ENCODE measurements at regions of chr19 and their contacts with region 1.

Region 1: DNA sequence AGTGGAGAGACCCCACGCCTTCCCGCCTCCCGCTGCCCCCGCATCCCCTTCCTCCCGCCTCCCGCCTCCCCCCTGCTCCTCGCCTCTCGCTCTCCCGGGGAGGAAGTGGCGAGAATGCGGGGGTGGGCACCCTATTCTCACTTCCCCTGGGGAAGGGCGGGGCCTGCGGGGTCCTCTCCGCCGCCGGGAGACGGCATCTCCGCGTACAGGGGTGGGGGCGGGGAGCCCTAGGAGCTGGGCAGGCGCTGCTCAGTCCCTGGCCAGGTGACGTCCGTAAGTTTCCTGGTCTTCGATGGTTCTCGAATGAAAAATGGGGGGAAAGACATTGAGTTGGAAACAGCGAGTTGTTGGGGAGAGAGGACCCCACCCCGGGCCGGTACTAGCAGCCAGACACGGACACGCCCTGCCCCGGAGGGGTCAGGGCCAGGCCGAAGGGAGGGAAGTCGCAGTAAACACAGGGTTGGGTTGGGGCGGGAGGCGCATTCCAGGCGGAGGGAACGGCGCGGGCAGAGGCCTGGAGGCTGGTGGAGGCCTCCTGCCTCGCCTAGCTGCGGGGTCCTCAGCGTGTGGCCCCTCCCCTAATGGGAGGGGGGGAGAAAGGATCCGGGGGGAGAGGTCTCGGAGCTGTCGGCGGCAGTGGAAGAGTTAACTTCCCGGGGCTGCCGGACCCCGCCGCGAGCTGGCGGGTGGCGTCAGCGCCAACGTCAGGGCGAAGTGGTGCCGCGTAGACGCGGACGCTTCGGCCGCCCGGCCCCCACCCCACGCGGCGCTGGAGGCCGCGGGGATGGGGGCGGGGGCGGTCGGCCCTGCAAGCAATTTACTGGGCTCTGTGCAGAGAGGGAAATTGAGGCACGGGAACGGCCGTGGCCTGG is 10.4 kb upstream of the JUND start:
- DNase-seq: peak in 8 of 9 donors; percentile 67 to 93 (median 70)
- ATAC-seq: peak; percentile 62
- H3K4me3 ChIP-seq: peak overlapping the region; percentile 84
- H3K4me3 Mint-ChIP-seq: peak overlapping the region; percentile 80 to 96 (median 92)
- H3K27ac ChIP-seq: peak overlapping the region; percentile 92
- H3K27ac Mint-ChIP-seq: peak overlapping the region; percentile 87 to 100 (median 97)
- H3K4me1 ChIP-seq: peaks cover 41 to 47% of the 10 kb centered on the region in 2 donors
- H3K4me1 Mint-ChIP-seq: peaks cover 38 to 73% (median 58%) of the 10 kb centered on the region in 7 donors
- H3K27me3 ChIP-seq: no peaks in the 10 kb centered on the region
- H3K27me3 Mint-ChIP-seq: no peaks in the 10 kb centered on the region

Region 2: DNA sequence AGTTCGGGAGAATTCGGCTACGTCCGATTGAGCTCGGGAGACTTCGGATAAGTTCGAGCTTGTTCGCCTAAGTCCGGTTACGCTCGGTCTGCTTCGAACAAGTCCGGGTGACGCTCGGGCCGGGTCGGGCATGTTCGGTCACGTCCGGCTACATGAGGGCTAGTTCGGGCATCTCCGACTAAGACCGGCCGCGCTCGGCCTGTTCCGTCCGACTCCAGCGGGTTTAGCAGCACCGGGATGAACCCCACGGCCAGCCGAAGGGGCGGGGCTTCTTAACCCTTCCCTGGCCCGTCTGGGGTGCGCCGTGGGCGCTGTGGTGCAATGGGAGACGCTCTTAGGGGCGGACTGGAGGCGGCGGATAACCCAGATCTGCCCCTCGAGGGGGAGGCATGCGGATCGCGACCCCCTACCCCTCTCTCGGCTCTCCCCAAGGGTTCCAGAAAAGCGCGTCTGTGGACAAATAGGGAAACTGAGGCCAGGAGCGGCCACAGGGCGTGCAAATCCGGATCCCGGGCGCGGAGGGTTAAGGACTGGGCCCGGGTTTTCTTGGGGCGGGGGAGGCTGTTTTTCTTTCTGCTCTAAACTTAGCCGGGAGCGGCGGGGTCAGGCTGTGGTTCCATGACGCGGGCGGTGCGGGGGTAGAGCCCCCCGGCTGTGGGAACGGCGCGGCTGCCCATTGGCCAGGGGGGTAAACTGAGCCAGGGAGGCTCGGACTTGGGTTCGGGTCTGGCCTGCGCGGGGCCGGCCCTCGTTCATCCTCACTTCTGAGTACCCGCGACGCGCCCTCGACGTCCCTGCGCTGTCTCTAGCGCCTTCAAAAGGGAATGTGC is 67.1 kb before region 1 on chr19:
- CTCF ChIA-PET with region 1: no interaction called
- POLR2A ChIA-PET with region 1: no interaction called
- intact Hi-C with region 1: no loop called
- DNase-seq: peak; percentile 65 to 87 (median 80)
- ATAC-seq: peak; percentile 98
- H3K4me3 ChIP-seq: peak overlapping the region; percentile 46
- H3K4me3 Mint-ChIP-seq: peak overlapping the region; percentile 80 to 90 (median 87)
- H3K27ac ChIP-seq: no peak overlapping the region
- H3K27ac Mint-ChIP-seq: peak overlapping the region in 2 of 9 donors; percentile 41 to 68
- H3K4me1 ChIP-seq: peaks cover 6 to 16% of the 10 kb centered on the region in 2 donors
- H3K4me1 Mint-ChIP-seq: peaks cover 11 to 25% (median 20%) of the 10 kb centered on the region in 7 donors
- H3K27me3 ChIP-seq: peaks cover 12 to 28% of the 10 kb centered on the region in 2 donors
- H3K27me3 Mint-ChIP-seq: peaks cover 43 to 66% (median 56%) of the 10 kb centered on the region in 5 donors

Region 3: DNA sequence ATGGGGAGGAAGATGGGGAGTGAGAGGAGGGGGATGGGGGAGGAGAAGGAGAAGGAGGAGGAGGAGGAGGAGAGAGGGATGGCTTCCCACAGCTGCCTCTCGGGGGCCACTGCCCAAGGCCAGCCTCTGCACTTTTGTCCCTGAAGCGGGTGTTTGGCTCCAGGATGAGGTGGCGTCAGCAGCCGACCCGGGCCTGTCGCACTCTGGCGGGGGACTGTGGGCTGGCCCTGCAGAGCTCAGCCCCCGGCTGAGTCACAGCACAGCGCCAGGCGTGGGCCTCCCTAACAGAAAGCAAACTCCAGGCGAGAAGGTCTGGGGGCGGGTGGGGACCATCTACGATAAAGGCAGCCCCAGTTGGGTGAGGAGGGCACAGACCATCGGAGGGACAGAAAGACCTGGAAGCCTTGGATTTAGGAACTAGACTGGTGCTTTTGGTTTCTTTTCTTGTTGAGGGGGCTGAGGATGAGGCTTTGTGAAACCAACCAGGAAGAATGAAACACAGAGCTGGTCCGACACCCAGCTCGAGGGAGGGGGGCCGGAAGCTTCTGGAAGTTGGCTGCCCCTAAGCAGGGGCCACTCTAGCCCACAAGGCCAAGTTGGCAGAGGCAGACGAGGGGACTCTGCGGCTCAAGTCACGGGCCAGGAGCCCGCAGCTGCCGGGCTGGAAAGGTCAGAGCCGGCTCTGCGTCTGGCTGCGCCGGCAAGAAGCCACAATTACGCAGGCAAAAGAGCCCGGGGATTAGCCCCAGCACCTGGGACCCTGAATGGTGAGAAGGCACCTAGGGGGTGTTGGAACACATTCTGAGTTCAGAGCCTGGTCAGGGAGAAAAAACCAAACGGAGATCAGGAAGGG is 12.9 kb after region 1 on chr19:
- CTCF ChIA-PET with region 1: interaction called, 6 read pairs
- POLR2A ChIA-PET with region 1: interaction called, 128 read pairs
- intact Hi-C with region 1: loop called (anchors 1 kb)
- DNase-seq: peak; percentile 47 to 85 (median 57)
- ATAC-seq: peak; percentile 84
- H3K4me3 ChIP-seq: peak overlapping the region; percentile 75
- H3K4me3 Mint-ChIP-seq: peak overlapping the region; percentile 90 to 98 (median 94)
- H3K27ac ChIP-seq: peak overlapping the region; percentile 97
- H3K27ac Mint-ChIP-seq: peak overlapping the region; percentile 95 to 100 (median 98)
- H3K4me1 ChIP-seq: peaks cover 31 to 37% of the 10 kb centered on the region in 2 donors
- H3K4me1 Mint-ChIP-seq: peaks cover 12 to 47% (median 43%) of the 10 kb centered on the region in 7 donors
- H3K27me3 ChIP-seq: no peaks in the 10 kb centered on the region
- H3K27me3 Mint-ChIP-seq: no peaks in the 10 kb centered on the region